Gastrocnemius medialis (tissue), 4 donors: ENCODE measurements at regions of chr12 and their contacts with region 1.

Region 1: GRCh38 chr12:14845350-14845750 is 2.0 kb upstream of the ART4 start:
- DNase-seq: no peak
- ATAC-seq: peak; percentile 53 to 61
- H3K4me3 ChIP-seq: no peak overlapping the region
- H3K27ac ChIP-seq: peak overlapping the region; percentile 13 to 62 (median 46)
- H3K4me1 ChIP-seq: peaks cover 29 to 43% of the 10 kb centered on the region in 2 donors
- H3K27me3 ChIP-seq: no peaks in the 10 kb centered on the region
- CTCF ChIP-seq: peak; percentile 68 to 76 (median 71)
- POLR2A ChIP-seq: no peak

Region 2: DNA sequence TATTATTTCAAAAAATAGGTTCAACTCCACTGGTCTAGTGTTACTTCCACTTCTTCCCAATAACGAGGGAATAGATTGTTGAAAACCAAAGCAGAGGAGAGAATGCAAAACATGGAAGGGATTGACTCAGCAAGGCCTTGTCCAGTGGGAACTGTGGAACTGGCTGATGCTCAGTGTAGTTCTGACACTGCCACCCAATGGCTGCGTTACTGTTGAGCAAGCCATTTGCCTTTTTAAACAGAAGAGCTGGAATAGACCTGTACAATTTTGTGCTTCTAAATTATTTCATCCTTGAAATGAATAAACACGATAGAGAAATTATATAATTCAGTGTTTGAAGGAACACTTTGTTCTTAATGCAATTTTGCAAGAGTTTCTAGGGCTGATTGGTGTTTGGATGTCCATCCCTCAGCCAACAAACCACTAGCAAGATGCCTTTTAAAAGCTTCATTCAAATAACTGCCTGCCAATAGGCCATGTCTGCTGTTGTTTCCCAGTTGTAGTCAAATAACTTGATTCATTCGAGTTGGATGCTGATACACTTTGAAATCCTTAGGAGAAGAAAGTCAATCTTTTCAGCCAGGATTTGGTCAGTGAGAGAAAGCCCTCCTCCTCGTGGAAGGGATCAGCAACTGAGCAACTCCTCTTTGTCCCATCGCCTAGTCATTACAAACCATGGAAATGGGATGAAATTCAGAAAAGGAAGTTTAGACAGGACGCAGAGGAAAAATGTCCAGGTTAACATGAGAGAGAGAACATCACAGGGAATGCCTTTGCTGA is 47.6 kb after region 1 on chr12:
- in situ Hi-C with region 1: no loop called
- intact Hi-C with region 1: loop called (anchors 2 kb)
- DNase-seq: peak; percentile 35 to 65
- ATAC-seq: peak; percentile 82 to 83
- H3K4me3 ChIP-seq: no peak overlapping the region
- H3K27ac ChIP-seq: peak overlapping the region; percentile 65 to 71 (median 67)
- H3K4me1 ChIP-seq: peaks cover 3 to 17% of the 10 kb centered on the region in 2 donors
- H3K27me3 ChIP-seq: no peaks in the 10 kb centered on the region
- CTCF ChIP-seq: no peak
- POLR2A ChIP-seq: peak in 1 of 2 donors; percentile 32

Region 3: GRCh38 chr12:14995583-14996425 is 150.5 kb after region 1 on chr12:
- in situ Hi-C with region 1: loop called (anchors 5 to 10 kb)
- intact Hi-C with region 1: loop called (anchors 1 kb)
- DNase-seq: no peak
- ATAC-seq: no peak
- H3K4me3 ChIP-seq: no peak overlapping the region
- H3K27ac ChIP-seq: no peak overlapping the region
- H3K4me1 ChIP-seq: peaks cover 3 to 8% of the 10 kb centered on the region in 2 donors
- H3K27me3 ChIP-seq: no peaks in the 10 kb centered on the region
- CTCF ChIP-seq: peak; percentile 32 to 73 (median 57)
- POLR2A ChIP-seq: no peak

Region 4: DNA sequence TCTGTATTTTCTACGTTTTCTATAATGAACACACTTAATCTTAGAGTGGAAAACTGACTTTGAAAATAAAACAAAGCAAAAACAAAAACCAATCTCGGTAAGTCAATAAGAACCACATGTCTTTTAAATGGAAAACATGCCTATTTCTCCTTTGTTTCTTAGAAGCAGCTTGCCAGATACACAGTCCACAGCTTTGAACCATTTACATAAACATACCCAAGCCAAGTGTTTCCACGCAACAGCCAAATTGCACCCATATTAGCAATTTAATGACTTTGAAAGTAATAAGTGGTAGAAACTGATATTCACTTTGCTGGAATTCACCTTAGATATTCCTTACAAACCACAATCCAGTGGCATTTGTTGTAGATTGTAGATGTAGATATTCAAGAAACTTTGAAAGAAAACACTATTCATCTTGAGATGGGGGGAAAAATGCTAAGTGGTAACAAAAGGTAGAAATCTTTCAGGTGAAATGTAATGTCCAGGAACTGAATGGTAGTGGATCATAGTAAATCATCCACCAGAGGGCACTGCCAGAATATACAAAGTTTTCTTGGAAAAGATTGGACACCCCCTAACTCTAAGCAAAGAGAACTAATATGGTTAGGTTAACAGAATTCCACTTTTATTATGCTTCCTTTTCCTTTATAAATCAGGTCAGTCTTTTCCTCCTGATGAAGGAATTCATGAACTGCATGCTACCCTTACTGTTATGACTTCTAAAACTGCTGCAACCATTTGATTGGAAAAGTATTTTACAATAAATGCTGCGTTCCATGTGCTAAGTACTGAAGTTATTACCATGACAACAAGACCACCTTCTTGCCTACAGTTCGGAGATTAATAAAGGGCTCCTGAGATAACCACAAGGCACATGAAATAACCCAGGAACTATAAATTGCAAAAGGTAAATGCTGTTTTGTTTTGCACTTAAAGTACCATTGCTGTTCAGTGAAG is 306.1 kb after region 1 on chr12:
- in situ Hi-C with region 1: no loop called
- intact Hi-C with region 1: loop called (anchors 5 kb)
- DNase-seq: no peak
- ATAC-seq: peak; percentile 56 to 62
- H3K4me3 ChIP-seq: no peak overlapping the region
- H3K27ac ChIP-seq: peak overlapping the region; percentile 34 to 59 (median 54)
- H3K4me1 ChIP-seq: peaks cover 0 to 9% of the 10 kb centered on the region in 2 donors
- H3K27me3 ChIP-seq: no peaks in the 10 kb centered on the region
- CTCF ChIP-seq: peak in 4 of 5 experiments; percentile 37 to 48 (median 48)
- POLR2A ChIP-seq: no peak

Region 5: GRCh38 chr12:15172060-15172822 is 326.9 kb after region 1 on chr12:
- in situ Hi-C with region 1: no loop called
- intact Hi-C with region 1: no loop called
- DNase-seq: no peak
- ATAC-seq: no peak
- H3K4me3 ChIP-seq: no peak overlapping the region
- H3K27ac ChIP-seq: no peak overlapping the region
- H3K4me1 ChIP-seq: peaks cover 0 to 4% of the 10 kb centered on the region in 2 donors
- H3K27me3 ChIP-seq: no peaks in the 10 kb centered on the region
- CTCF ChIP-seq: peak in 1 of 5 experiments; percentile 3
- POLR2A ChIP-seq: no peak

Region 6: DNA sequence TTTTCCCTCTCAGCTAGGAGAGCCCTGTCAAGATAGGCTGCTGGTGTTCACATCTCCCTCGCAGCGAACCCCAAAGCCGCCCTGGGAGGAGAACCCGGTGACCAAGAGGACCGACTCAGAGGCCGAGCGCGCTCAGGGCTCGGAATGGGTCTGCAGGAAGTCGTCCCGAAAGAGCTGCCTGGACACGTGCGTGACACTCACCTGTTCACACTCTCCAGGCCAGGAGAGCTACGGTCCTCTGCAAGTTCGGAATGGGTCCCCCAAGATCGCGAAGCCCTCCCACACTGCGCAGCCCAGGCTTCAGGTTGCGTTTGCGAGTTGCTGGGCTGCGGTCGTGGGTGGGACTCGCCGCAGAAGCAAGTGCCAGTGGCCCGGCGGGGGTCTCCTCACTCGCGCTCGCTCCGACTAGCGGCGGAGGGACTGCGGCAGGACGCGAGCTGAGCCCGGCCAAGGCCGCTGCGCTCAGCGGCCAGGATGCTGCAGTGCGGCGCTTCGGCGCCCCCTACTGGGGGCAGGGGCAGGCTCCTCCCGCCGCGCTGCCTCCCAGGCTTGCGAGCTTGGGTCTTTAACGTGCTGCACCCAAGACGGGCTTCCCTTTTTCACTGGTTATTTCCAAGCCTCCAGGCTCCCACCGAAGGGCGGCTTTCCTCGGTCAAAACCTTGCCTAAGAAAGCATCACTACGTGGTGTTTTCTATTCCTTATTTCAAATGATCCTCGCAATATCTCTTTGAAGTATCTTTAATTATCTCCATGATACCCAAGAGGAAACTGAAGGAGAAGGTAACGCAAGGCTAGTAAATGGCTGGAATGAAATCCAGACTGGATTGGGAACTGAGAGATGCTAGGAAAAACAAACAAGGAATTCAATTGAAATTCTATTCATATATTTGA is 375.9 kb after region 1 on chr12 and contains the start of gene RERG:
- in situ Hi-C with region 1: loop called in 2 of 4 experiments (anchors 10 to 25 kb)
- intact Hi-C with region 1: loop called (anchors 2 kb)
- DNase-seq: peak; percentile 48 to 52
- ATAC-seq: peak; percentile 89 to 97
- H3K4me3 ChIP-seq: peak within 1 kb of the TSS; percentile 54 to 60 (median 56)
- H3K27ac ChIP-seq: peak within 1 kb of the TSS; percentile 63 to 71 (median 70)
- H3K4me1 ChIP-seq: peaks cover 5 to 7% of the 10 kb centered on the region in 2 donors
- H3K27me3 ChIP-seq: no peaks in the 10 kb centered on the region
- CTCF ChIP-seq: peak; percentile 85 to 96 (median 91)
- POLR2A ChIP-seq: peak in 1 of 2 donors; percentile 22
- total RNA-seq, gene RERG: 4.3 to 6.5 (median 5.8) TPM

Region 7: GRCh38 chr12:15227004-15227679 is 381.8 kb after region 1 on chr12:
- in situ Hi-C with region 1: loop called in 2 of 4 experiments (anchors 10 to 25 kb)
- intact Hi-C with region 1: no loop called
- DNase-seq: peak; percentile 15 to 32
- ATAC-seq: no peak
- H3K4me3 ChIP-seq: no peak overlapping the region
- H3K27ac ChIP-seq: no peak overlapping the region
- H3K4me1 ChIP-seq: peaks cover 0 to 6% of the 10 kb centered on the region in 2 donors
- H3K27me3 ChIP-seq: no peaks in the 10 kb centered on the region
- CTCF ChIP-seq: peak; percentile 36 to 60 (median 44)
- POLR2A ChIP-seq: no peak

Region 8: GRCh38 chr12:15268927-15269552 is 423.7 kb after region 1 on chr12:
- in situ Hi-C with region 1: loop called in 2 of 4 experiments (anchors 10 to 25 kb)
- intact Hi-C with region 1: loop called (anchors 5 kb)
- DNase-seq: peak in 1 of 2 donors; percentile 31
- ATAC-seq: peak; percentile 56 to 60
- H3K4me3 ChIP-seq: no peak overlapping the region
- H3K27ac ChIP-seq: no peak overlapping the region
- H3K4me1 ChIP-seq: peaks cover 0 to 3% of the 10 kb centered on the region in 2 donors
- H3K27me3 ChIP-seq: no peaks in the 10 kb centered on the region
- CTCF ChIP-seq: peak; percentile 66 to 86 (median 75)
- POLR2A ChIP-seq: no peak